Activated CD8-positive, alpha-beta T cell treated with anti-CD3 and anti-CD28 coated beads, Interleukin-2, amount 10 ng/mL, durations not matched to agents 7 days and 5 days (primary cell): ENCODE measurements at regions of chr9 and their contacts with region 1.

Region 1: GRCh38 chr9:73023025-73023541 is 70.2 kb upstream of the ALDH1A1 start:
- DNase-seq: peak; percentile 62
- ATAC-seq: peak; percentile 39
- H3K4me3 Mint-ChIP-seq: no peak overlapping the region
- H3K27ac Mint-ChIP-seq: no peak overlapping the region
- H3K4me1 Mint-ChIP-seq: peaks cover 9% of the 10 kb centered on the region
- H3K27me3 Mint-ChIP-seq: peaks cover 10% of the 10 kb centered on the region

Region 2: GRCh38 chr9:72856972-72857623 is 166.0 kb before region 1 on chr9:
- CTCF ChIA-PET with region 1: interaction called, 15 read pairs
- POLR2A ChIA-PET with region 1: no interaction called
- DNase-seq: no peak
- ATAC-seq: no peak
- H3K4me3 Mint-ChIP-seq: no peak overlapping the region
- H3K27ac Mint-ChIP-seq: no peak overlapping the region
- H3K4me1 Mint-ChIP-seq: no peaks in the 10 kb centered on the region
- H3K27me3 Mint-ChIP-seq: no peaks in the 10 kb centered on the region

Region 3: GRCh38 chr9:72907421-72907820 is 115.7 kb before region 1 on chr9:
- CTCF ChIA-PET with region 1: no interaction called
- POLR2A ChIA-PET with region 1: no interaction called
- DNase-seq: no peak
- ATAC-seq: no peak
- H3K4me3 Mint-ChIP-seq: no peak overlapping the region
- H3K27ac Mint-ChIP-seq: no peak overlapping the region
- H3K4me1 Mint-ChIP-seq: no peaks in the 10 kb centered on the region
- H3K27me3 Mint-ChIP-seq: peaks cover 2% of the 10 kb centered on the region